ENCODE measurements at regions of chr5 and their contacts with region 1.

Region 1: DNA sequence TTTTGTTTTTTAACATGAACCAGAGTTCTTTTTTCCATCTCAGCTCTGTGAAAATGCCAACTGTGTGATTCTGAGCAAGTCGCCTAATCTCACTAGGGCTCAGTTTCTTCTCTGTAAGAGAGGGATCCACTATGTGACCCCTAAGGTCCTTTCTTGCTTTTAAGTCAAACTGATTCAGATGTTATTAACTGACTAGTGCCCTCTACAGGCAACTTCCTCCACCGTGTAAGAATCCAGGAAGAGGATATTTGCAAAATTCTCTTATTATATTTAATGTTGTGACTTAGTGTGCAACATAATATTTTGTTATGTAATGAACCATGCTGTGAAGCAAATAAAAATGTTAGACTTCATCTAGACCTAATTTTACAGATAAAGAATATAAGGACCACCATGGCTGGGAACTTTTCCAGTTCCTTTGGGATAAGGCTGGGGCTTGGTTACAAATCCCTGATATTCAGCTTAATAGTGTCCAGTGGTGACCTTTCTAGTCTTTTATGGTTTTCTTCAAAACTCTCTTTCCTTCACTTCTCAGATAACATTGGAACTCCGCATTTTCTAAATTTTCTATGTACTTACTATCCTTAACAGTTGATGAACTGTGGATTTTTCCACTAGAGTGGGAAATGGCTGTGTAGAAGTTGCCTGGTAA is 244.7 kb downstream of the PIK3R1 start:
- DNase-seq: peak; percentile 7
- H3K4me3 ChIP-seq: no peak overlapping the region
- H3K27ac ChIP-seq: no peak overlapping the region
- H3K4me1 ChIP-seq: no peaks in the 10 kb centered on the region
- H3K27me3 ChIP-seq: no peaks in the 10 kb centered on the region
- CTCF ChIP-seq: peak; percentile 44 to 54 (median 46)
- POLR2A ChIP-seq: no peak

Region 2: GRCh38 chr5:68953875-68954617 is 493.8 kb after region 1 on chr5:
- intact Hi-C with region 1: loop called (anchors 10 kb)
- DNase-seq: peak; percentile 36
- H3K4me3 ChIP-seq: no peak overlapping the region
- H3K27ac ChIP-seq: peak overlapping the region; percentile 38 to 58
- H3K4me1 ChIP-seq: peaks cover 12% of the 10 kb centered on the region
- H3K27me3 ChIP-seq: no peaks in the 10 kb centered on the region
- CTCF ChIP-seq: no peak
- POLR2A ChIP-seq: no peak

Region 3: DNA sequence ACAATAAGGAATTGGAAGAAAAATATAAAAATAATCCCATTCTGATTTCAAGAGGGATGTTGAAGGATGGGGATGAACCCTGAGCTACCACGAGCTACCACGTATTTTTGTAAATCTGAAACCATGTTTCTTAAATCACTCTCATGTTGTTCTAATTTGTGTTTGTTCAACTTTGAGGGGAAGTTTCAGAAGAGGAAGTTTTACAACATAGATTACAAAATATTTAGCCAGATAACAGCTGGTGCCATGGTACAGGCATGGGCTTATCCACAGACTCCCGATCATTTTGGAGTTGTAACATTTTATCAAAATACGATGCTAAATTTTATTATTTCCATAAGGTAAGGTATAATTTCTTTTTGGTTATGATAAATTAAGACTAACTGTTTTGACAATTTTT is 857.1 kb after region 1 on chr5:
- intact Hi-C with region 1: no loop called
- DNase-seq: no peak
- H3K4me3 ChIP-seq: no peak overlapping the region
- H3K27ac ChIP-seq: no peak overlapping the region
- H3K4me1 ChIP-seq: no peaks in the 10 kb centered on the region
- H3K27me3 ChIP-seq: no peaks in the 10 kb centered on the region
- CTCF ChIP-seq: no peak
- POLR2A ChIP-seq: no peak

Measured in prostate gland (tissue), 2 donors.